GM12878 (cell line): ENCODE measurements at regions of chr16 and their contacts with region 1.

Region 1: DNA sequence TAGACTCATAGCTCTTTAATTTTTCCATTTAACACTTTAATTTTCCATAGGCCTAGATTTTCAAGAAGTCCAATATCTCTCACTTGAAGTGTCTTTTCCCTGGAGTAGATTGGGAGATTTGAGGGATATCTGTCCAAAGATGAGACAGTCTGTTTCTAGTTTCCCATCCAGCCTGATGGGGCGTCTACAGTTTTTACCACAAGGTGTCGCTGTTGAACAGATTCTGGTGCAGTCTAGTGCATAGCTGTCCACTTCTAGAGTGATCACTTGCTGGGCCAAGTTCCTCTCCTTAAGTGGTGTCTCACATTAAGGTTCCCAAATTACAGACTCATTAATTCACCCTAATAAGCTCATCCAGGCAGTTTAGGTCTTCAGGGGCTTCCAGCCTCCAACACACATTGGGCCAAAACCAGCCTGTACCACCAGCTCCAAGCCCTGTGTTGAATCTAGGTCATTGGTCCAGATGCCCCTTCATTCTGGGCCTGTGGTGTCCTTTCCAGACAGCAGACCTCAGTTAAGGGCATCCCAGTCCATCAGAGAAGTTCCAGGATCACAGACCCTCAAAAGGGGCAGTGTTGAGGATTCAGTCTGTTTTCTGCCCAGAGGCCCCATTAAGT is 9.4 kb downstream of the SNX20 start:
- DNase-seq: no peak
- ATAC-seq: peak; percentile 52
- H3K4me3 ChIP-seq: no peak overlapping the region
- H3K27ac ChIP-seq: no peak overlapping the region
- H3K4me1 ChIP-seq: peaks cover 10% of the 10 kb centered on the region
- H3K27me3 ChIP-seq: no peaks in the 10 kb centered on the region
- CTCF ChIP-seq: peak; percentile 54 to 61 (median 59); a peak in 5 of 6 replicates
- EP300 ChIP-seq: no peak
- POLR2A ChIP-seq: no peak
- RAD21 ChIP-seq: peak; percentile 73

Region 2: DNA sequence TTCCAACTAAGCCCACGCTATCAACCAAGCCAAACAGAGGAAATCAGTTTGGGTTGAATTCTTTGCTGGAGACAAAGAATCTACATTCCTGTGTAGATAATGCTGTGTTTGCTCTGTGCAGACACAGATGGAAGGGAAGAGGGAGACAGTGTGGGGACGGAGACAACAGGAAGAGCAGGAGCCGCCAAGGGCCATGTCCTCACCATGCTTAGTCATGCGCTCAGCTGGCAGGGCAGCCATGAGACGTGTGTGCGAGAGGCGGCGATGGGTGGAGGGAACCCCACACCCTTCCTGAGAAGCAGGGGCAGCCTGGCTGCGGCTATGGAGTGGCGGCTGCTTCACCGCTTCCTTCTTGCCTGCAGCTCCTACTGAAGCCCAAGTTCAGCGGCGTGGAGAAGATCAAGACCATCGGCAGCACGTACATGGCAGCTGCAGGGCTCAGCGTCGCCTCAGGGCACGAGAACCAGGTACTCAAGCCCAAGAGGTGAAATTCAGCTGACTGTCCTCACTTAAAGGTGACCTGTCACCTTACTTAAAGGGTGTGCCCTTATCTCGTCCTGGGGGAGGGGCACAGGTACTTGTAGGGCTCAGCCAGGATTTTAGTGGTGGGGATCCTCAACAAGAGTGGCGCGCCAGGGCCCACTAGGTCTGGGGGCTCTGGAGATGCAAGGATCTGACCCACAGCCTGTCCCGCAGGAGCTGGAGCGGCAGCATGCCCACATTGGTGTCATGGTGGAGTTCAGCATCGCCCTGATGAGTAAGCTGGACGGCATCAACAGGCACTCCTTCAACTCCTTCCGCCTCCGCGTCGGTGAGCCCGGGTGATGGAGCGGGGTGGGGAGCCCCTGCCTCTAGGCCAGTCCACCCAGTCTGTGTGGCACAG is 357.9 kb before region 1 on chr16:
- CTCF ChIA-PET with region 1: no interaction called
- POLR2A ChIA-PET with region 1: no interaction called
- RAD21 ChIA-PET with region 1: no interaction called
- SMC1A ChIA-PET with region 1: no interaction called
- in situ Hi-C with region 1: no loop called
- intact Hi-C with region 1: no loop called
- DNase-seq: no peak
- ATAC-seq: no peak
- H3K4me3 ChIP-seq: no peak overlapping the region
- H3K27ac ChIP-seq: no peak overlapping the region
- H3K4me1 ChIP-seq: no peaks in the 10 kb centered on the region
- H3K27me3 ChIP-seq: no peaks in the 10 kb centered on the region
- CTCF ChIP-seq: no peak
- EP300 ChIP-seq: no peak
- POLR2A ChIP-seq: peak; percentile 53
- RAD21 ChIP-seq: no peak

Region 3: GRCh38 chr16:50735629-50736122 is 63.9 kb after region 1 on chr16:
- CTCF ChIA-PET with region 1: interaction called, 35 read pairs
- POLR2A ChIA-PET with region 1: interaction called, 7 read pairs
- RAD21 ChIA-PET with region 1: interaction called, 4 read pairs
- SMC1A ChIA-PET with region 1: interaction called, 17 read pairs
- in situ Hi-C with region 1: no loop called
- intact Hi-C with region 1: no loop called
- DNase-seq: peak; percentile 81
- ATAC-seq: peak; percentile 74
- H3K4me3 ChIP-seq: no peak overlapping the region
- H3K27ac ChIP-seq: peak overlapping the region; percentile 55
- H3K4me1 ChIP-seq: peaks cover 26% of the 10 kb centered on the region
- H3K27me3 ChIP-seq: no peaks in the 10 kb centered on the region
- CTCF ChIP-seq: no peak
- EP300 ChIP-seq: peak; percentile 68 to 83; a peak in 3 of 4 replicates
- POLR2A ChIP-seq: no peak
- RAD21 ChIP-seq: no peak